ENCODE measurements at regions of chr5 and their contacts with region 1.

Region 1: DNA sequence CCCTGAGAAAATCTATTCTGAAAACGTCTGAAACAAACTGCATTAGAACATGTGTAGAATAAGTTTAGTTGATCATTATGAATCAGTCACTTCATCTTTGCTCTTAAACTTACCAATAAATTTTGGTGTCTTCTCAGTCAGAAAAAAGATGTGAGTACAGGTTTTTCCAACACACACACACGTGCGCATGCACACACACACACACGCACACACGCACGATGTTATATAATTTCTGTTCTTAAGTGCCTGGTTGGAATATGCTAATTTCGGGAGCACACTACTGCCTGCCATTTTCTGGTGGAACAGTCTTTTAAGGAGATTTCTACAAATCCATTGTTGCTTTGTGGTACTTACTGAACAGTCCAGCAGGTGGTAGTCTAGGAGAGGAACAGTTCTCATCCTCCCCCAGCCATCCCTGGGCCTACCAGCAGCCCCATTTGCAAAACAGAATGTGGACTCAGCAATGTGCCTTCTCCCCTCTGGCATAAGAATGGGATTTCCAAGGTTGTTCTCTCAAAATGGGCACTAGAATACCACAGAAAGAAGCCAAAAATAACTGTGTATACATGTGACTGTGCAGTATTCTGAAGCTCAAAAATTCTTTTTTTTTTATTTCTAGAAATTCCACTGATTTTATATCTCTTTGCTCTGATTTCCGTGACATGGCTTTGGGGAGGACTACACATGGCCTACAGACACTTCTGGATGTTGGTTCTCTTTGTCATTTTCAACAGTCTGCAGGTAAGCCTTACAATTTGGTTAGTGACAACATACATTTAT is 281.3 kb downstream of the ARRDC3 start:
- H3K4me3 Mint-ChIP-seq: no peak overlapping the region
- H3K27ac Mint-ChIP-seq: no peak overlapping the region
- H3K4me1 Mint-ChIP-seq: peaks cover 18% of the 10 kb centered on the region
- H3K27me3 Mint-ChIP-seq: no peaks in the 10 kb centered on the region

Region 2: DNA sequence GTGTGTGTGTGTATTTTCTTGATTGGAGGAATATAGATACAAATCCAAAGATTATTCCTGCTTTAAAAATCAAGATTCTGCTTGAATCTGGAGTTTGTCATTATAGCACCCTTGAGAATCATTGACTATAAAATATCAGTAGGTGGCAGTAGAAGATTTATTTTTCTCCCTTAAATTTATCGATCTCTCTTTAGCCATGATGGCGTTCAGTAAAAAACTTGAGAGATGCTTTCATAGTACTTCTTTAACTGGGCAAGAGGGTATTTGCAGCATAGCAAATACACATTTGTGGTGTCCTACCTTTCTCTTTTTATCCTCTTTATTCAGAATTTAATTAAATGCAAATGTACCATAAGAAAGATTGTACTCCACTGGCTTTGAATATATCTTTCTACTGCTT is 235.5 kb before region 1 on chr5:
- intact Hi-C with region 1: loop called (anchors 5 kb)
- H3K4me3 Mint-ChIP-seq: no peak overlapping the region
- H3K27ac Mint-ChIP-seq: no peak overlapping the region
- H3K4me1 Mint-ChIP-seq: no peaks in the 10 kb centered on the region
- H3K27me3 Mint-ChIP-seq: no peaks in the 10 kb centered on the region

Region 3: GRCh38 chr5:90932052-90932699 is 169.6 kb before region 1 on chr5:
- intact Hi-C with region 1: loop called (anchors 5 kb)
- H3K4me3 Mint-ChIP-seq: no peak overlapping the region
- H3K27ac Mint-ChIP-seq: no peak overlapping the region
- H3K4me1 Mint-ChIP-seq: no peaks in the 10 kb centered on the region
- H3K27me3 Mint-ChIP-seq: peaks cover 3% of the 10 kb centered on the region

Region 4: DNA sequence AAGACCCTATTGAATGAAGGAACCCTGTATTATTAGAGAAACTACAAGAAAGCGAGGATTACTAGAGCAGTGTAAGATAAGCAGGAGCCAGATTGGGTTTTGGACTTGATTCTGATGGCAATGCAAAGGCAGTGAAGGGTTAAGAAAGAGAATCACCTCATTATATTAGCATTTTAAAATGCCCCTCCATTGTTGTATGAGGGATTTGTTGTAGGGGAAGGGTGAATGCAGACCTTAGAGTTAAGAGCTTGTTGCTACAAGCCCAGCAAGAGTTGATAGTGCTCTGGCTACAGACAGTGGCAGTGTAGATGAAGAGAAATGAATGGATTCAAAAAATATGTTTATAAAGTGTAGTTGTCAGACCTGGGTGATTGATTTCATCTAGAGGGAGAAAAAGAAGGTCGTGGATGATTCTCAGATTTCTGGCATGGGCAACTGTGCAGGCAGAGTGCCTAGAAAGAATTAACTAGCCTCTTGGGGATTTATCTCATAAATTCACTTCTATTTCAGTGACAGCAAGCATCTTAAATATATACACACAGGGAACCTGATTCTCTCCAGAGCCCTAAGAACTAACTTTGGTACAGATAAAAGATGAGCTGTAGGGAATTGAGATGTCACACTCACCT is 63.5 kb before region 1 on chr5:
- intact Hi-C with region 1: no loop called
- H3K4me3 Mint-ChIP-seq: no peak overlapping the region
- H3K27ac Mint-ChIP-seq: no peak overlapping the region
- H3K4me1 Mint-ChIP-seq: no peaks in the 10 kb centered on the region
- H3K27me3 Mint-ChIP-seq: no peaks in the 10 kb centered on the region

Region 5: GRCh38 chr5:91162534-91163381 is 61.0 kb after region 1 on chr5:
- intact Hi-C with region 1: loop called (anchors 5 kb)
- H3K4me3 Mint-ChIP-seq: no peak overlapping the region
- H3K27ac Mint-ChIP-seq: peak overlapping the region; percentile 86
- H3K4me1 Mint-ChIP-seq: peaks cover 29% of the 10 kb centered on the region
- H3K27me3 Mint-ChIP-seq: no peaks in the 10 kb centered on the region

Region 6: GRCh38 chr5:91280362-91281269 is 178.8 kb after region 1 on chr5:
- intact Hi-C with region 1: loop called (anchors 10 kb)
- H3K4me3 Mint-ChIP-seq: peak overlapping the region; percentile 81
- H3K27ac Mint-ChIP-seq: peak overlapping the region; percentile 100
- H3K4me1 Mint-ChIP-seq: peaks cover 54% of the 10 kb centered on the region
- H3K27me3 Mint-ChIP-seq: peaks cover 1% of the 10 kb centered on the region

Region 7: GRCh38 chr5:91419571-91420537 is 318.1 kb after region 1 on chr5:
- intact Hi-C with region 1: loop called (anchors 1 kb)
- H3K4me3 Mint-ChIP-seq: no peak overlapping the region
- H3K27ac Mint-ChIP-seq: no peak overlapping the region
- H3K4me1 Mint-ChIP-seq: peaks cover 4% of the 10 kb centered on the region
- H3K27me3 Mint-ChIP-seq: no peaks in the 10 kb centered on the region

Measured in dendritic cell treated with granulocyte-macrophage colony-stimulating factor and Interleukin-4, amounts not matched to agents 40 ng/mL and 50 ng/mL, for 4 days (primary cell).